ENCODE measurements at regions of chr12 and their contacts with region 1.

Region 1: DNA sequence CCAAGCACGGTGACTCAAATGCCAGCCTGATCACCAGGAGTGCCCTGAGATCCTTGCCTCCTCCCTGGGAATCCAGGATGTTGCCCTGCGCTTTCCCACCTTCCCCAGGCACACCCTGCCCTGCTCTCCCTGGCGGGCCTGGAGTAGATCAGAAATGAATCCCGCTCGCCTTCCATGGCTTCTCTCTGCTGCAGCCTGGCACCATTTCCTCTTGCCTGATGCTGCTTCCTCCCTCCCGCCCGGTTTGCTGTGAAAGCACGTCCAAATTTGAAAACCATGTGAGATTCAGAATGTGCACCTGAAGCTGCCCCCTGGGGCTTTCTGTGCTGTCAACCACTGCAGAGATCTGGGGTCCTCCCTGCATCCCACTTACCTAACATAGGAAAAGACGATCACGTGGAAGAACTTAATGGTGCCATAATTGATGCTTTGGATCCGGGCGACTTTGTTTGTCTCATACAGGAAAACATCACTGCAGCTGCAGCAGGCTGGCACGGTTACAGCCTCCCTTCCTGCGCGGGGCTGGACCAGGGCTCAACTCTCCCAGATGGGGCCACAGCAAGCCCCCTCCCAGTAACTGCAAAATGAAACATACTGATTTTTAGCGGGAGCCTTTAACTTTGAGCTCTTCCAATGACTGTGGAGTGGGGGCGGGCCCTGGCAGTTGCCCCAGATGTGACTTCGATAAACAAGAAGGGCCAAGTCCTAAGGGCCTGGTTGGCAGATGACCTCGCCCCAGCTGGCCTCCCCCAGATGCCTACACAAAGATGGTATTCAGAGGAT is 24.9 kb upstream of the C12orf76 start:
- DNase-seq: peak; percentile 55 to 99 (median 95)
- H3K4me3 ChIP-seq: peak overlapping the region; percentile 36 to 81 (median 63)
- H3K27ac ChIP-seq: peak overlapping the region; percentile 76 to 99 (median 97)
- H3K27me3 ChIP-seq: no peaks in the 10 kb centered on the region
- CTCF ChIP-seq: peak in 4 of 56 donors; percentile 11 to 26 (median 18)

Region 2: GRCh38 chr12:109863847-109864712 is 209.2 kb before region 1 on chr12:
- intact Hi-C with region 1: no loop called
- DNase-seq: peak in 9 of 10 donors; percentile 74 to 92 (median 86)
- H3K4me3 ChIP-seq: peak overlapping the region in 7 of 59 donors; percentile 1 to 25 (median 5)
- H3K27ac ChIP-seq: peak overlapping the region; percentile 85 to 99 (median 96)
- H3K27me3 ChIP-seq: no peaks in the 10 kb centered on the region
- CTCF ChIP-seq: peak in 12 of 56 donors; percentile 7 to 45 (median 24)

Region 3: DNA sequence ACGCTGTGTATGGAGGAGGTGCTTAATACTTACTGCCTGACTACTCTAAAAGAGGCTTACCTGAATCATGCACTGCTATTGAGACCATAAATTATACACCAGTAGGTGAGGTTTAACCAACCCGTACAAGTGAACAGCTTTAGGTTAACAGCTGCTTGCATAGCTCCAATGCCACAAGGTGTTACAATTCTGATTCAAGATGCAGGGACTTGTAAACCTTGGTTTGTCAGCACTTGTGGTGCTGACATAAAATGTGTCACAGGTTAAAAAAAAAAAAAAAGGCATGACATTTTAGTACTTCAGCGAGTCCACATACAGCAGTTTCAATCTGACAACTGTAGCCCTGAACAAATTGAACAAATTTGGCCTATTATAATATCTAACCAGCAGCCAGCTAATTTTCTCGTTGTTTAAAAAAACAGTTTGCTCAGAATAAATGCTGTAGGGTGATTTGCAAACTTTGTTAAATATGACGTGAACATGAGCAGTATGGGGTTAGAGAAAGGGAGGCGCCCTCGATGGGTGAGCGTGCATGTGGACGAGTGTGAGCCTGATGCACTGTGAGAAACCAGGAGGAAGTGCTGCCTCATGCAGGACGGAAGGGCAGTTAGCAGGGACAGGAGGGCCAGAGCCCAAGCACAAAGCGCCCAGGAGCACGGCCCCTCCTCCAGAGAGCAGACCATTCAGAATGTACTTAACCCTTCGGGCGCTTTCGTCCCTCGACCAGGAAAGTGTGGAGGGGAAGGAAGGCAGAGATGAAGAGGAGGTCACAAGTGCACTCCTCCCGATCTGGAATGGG is 128.5 kb before region 1 on chr12:
- intact Hi-C with region 1: no loop called
- DNase-seq: peak in 1 of 10 donors; percentile 26
- H3K4me3 ChIP-seq: no peak overlapping the region
- H3K27ac ChIP-seq: peak overlapping the region in 7 of 59 donors; percentile 5 to 61 (median 22)
- H3K27me3 ChIP-seq: no peaks in the 10 kb centered on the region
- CTCF ChIP-seq: peak in 1 of 56 donors; percentile 5

Region 4: DNA sequence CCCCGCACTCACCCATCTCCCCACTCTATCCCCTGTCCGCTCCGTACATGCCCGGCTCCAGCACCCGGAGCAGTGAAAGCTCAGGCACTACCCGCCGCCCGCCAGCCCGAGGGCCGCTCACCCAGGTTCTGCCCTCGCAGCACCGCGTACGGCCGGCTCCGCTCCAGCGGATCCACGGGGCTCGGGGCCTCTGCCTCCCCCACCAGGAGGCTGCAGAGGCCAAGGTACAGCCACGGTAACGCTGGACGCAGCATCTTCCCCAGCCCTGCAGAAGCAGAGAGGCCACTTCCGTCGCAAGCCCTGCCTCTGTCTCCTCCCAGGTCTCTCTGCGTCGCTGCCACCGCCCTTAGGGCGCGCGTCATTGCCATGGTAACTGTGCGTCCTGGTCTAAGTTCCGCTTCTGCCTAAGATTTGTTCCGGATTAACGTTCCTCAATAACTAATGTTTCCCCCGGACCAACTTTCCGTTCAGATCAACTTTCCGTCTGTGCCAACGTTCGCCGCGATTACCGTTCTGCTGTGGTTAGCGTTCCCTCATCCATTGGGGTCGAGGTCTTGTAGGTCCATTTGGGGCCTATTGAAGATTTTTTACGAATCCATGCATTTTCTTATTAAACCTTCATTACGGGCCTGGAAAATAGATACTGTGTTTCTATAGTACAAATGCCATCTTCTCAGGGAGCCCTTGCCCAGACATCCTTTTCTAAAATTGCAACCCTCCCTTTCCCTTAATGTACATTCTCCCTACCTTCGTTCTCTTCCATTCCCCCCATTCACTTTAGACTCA is 24.8 kb before region 1 on chr12 and contains the start of gene C12orf76:
- intact Hi-C with region 1: loop called in 1 of 2 experiments (anchors 1 kb)
- DNase-seq: peak; percentile 85 to 97 (median 94)
- H3K4me3 ChIP-seq: peak within 1 kb of the TSS; percentile 65 to 99 (median 91)
- H3K27ac ChIP-seq: peak within 1 kb of the TSS; percentile 41 to 94 (median 84)
- H3K27me3 ChIP-seq: no peaks in the 10 kb centered on the region
- CTCF ChIP-seq: peak in 39 of 56 donors; percentile 8 to 52 (median 29)
- total RNA-seq, gene C12orf76: 66.2 to 164 (median 106) TPM

Region 5: DNA sequence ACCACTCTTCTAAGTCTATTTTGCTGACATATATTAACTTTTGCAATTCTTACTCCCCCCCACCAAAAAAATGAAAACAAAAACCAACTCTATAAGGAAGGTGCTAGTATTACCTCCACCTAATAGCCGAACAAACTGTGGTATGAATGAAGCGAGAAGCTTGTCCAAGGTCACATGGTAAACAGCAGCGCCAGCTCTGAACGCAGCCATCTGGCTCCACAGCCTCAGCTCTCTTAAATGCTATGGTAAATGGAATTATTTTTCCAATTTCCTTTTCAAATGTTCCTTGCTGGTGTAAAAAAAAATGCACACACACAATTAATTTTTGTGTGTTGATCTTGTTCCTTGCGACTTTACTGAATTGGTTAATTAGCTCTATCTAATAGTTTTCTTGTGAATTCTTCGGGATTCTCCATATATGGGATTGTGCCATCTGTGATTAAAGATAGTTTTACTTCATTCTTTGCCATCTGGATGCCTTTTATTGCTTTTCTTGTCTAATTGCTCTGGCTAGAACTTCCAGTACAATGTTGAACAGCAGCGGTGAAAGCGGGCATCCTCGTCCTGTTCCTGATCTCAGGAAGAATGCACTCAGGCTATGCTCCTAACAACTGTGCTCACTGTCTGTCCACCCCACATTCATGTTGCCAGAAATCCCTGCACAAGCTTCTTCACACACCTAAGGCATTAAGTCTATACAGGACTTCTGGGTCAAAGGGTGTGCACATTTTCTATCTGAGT is 14.2 kb before region 1 on chr12:
- intact Hi-C with region 1: loop called in 1 of 2 experiments (anchors 2 kb)
- DNase-seq: peak in 3 of 10 donors; percentile 20 to 54 (median 37)
- H3K4me3 ChIP-seq: peak overlapping the region in 1 of 59 donors; percentile 4
- H3K27ac ChIP-seq: peak overlapping the region; percentile 49 to 99 (median 95)
- H3K27me3 ChIP-seq: no peaks in the 10 kb centered on the region
- CTCF ChIP-seq: no peak

Measured in dorsolateral prefrontal cortex (tissue), 120 donors.